Activated CD4-positive, alpha-beta T cell treated with anti-CD3 and anti-CD28 coated beads, Interleukin-2, amount 10 ng/mL, durations not matched to agents 24 days and 14 days (primary cell): ENCODE measurements at regions of chr6 and their contacts with region 1.

Region 1: GRCh38 chr6:159929819-159930218 is 39.0 kb downstream of the MAS1 start:
- DNase-seq: no peak
- H3K4me3 Mint-ChIP-seq: no peak overlapping the region
- H3K27ac Mint-ChIP-seq: no peak overlapping the region
- H3K4me1 Mint-ChIP-seq: peaks cover 23% of the 10 kb centered on the region
- H3K27me3 Mint-ChIP-seq: peaks cover 20% of the 10 kb centered on the region

Region 2: DNA sequence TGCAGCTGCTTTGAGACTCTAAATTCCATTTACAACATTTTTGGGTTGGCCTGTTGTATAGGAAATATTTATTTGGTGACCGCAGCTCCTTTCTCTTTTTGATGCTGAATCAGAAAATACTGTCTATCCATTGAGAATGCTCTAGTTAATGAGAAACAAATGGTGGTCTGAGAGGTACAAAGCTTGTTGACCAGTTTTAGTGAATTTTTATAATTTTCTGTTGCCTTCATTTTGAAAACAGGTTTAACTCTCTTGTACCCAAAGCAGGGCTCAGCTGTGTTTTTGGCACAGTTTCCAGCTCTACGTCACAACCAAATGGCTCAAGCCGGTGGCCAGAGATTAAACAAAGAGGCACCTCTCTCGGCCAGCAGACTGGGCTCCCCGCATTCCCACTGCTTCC is 647.4 kb before region 1 on chr6:
- intact Hi-C with region 1: no loop called
- DNase-seq: no peak
- H3K4me3 Mint-ChIP-seq: no peak overlapping the region
- H3K27ac Mint-ChIP-seq: no peak overlapping the region
- H3K4me1 Mint-ChIP-seq: no peaks in the 10 kb centered on the region
- H3K27me3 Mint-ChIP-seq: peaks cover 3% of the 10 kb centered on the region

Region 3: DNA sequence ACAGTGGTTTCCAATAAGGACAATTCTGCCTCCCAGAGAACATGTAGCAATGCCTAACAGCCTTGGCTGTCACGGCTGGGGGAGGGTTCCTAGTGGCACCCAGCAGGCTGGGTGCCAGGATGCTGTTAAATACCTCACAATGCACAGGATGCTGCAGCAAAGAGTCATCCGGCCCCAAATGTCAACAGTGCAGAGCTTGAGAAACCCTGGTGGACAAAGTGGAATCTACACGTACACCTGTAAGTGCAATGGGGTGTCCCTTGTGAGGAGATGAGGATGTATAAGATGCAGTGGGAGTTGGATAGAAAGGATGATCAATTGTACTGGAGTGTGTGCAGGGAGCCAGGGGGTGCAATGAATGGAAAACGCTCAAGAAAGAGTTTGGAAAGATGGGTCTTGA is 618.2 kb before region 1 on chr6:
- intact Hi-C with region 1: no loop called
- DNase-seq: no peak
- H3K4me3 Mint-ChIP-seq: no peak overlapping the region
- H3K27ac Mint-ChIP-seq: no peak overlapping the region
- H3K4me1 Mint-ChIP-seq: no peaks in the 10 kb centered on the region
- H3K27me3 Mint-ChIP-seq: no peaks in the 10 kb centered on the region

Region 4: GRCh38 chr6:159679091-159680077 is 250.4 kb before region 1 on chr6:
- intact Hi-C with region 1: loop called (anchors 1 kb)
- DNase-seq: no peak
- H3K4me3 Mint-ChIP-seq: peak overlapping the region; percentile 5
- H3K27ac Mint-ChIP-seq: peak overlapping the region; percentile 84
- H3K4me1 Mint-ChIP-seq: peaks cover 18% of the 10 kb centered on the region
- H3K27me3 Mint-ChIP-seq: peaks cover 1% of the 10 kb centered on the region

Region 5: GRCh38 chr6:159789377-159790148 is 140.3 kb before region 1 on chr6 and contains the start of gene TCP1:
- intact Hi-C with region 1: loop called (anchors 2 kb)
- DNase-seq: peak; percentile 100
- H3K4me3 Mint-ChIP-seq: peak within 1 kb of the TSS; percentile 97
- H3K27ac Mint-ChIP-seq: peak within 1 kb of the TSS; percentile 98
- H3K4me1 Mint-ChIP-seq: peaks cover 46% of the 10 kb centered on the region
- H3K27me3 Mint-ChIP-seq: peaks cover 3% of the 10 kb centered on the region
- total RNA-seq, gene TCP1: 528 and 531 TPM in 2 replicates

Region 6: DNA sequence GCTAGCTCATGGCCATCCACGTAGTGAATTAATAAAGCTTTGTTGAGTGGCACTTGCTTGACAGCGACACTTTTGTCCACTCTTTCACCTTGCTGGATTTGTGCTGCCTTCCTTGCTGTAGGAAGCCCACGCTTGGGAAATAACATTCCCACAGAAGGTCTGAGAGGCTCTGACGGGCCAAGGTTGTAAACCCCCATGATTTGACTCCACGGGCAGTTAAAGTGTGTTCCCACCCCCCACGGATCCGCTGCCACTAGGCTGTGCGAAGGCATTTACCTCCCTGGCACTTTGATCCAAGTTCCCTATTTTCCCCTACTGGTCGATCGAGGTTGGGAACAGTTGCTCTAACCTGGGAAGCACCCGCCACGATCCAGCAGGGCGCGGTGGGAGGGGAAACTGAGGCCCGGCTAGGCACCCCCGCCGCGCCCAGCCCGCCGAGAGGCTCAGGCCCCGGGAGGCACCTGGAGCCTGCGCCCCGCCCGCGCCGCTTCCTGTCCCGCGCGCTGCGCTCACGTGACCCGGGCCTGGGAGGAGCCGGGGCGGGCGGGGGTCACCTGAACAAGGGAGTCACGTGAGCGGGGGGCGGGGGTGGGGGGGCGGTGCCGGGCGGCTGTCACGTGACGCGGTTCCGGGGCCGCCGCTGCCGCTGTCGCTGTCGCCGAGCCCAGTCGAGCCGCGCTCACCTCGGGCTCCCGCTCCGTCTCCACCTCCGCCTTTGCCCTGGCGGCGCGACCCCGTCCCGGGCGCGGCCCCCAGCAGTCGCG is 38.8 kb after region 1 on chr6 and contains the start of gene IGF2R:
- intact Hi-C with region 1: loop called (anchors 2 kb)
- DNase-seq: peak; percentile 98
- H3K4me3 Mint-ChIP-seq: peak within 1 kb of the TSS; percentile 88
- H3K27ac Mint-ChIP-seq: peak within 1 kb of the TSS; percentile 91
- H3K4me1 Mint-ChIP-seq: peaks cover 37% of the 10 kb centered on the region
- H3K27me3 Mint-ChIP-seq: peaks cover 23% of the 10 kb centered on the region
- total RNA-seq, gene IGF2R: 75.1 and 77.9 TPM in 2 replicates

Region 7: GRCh38 chr6:160027931-160028330 is 98.1 kb after region 1 on chr6:
- intact Hi-C with region 1: no loop called
- DNase-seq: no peak
- H3K4me3 Mint-ChIP-seq: no peak overlapping the region
- H3K27ac Mint-ChIP-seq: peak overlapping the region; percentile 83
- H3K4me1 Mint-ChIP-seq: peaks cover 20% of the 10 kb centered on the region
- H3K27me3 Mint-ChIP-seq: no peaks in the 10 kb centered on the region

Region 8: GRCh38 chr6:160221423-160221822 is 291.6 kb after region 1 on chr6:
- intact Hi-C with region 1: no loop called
- DNase-seq: no peak
- H3K4me3 Mint-ChIP-seq: no peak overlapping the region
- H3K27ac Mint-ChIP-seq: no peak overlapping the region
- H3K4me1 Mint-ChIP-seq: no peaks in the 10 kb centered on the region
- H3K27me3 Mint-ChIP-seq: peaks cover 6% of the 10 kb centered on the region

Region 9: DNA sequence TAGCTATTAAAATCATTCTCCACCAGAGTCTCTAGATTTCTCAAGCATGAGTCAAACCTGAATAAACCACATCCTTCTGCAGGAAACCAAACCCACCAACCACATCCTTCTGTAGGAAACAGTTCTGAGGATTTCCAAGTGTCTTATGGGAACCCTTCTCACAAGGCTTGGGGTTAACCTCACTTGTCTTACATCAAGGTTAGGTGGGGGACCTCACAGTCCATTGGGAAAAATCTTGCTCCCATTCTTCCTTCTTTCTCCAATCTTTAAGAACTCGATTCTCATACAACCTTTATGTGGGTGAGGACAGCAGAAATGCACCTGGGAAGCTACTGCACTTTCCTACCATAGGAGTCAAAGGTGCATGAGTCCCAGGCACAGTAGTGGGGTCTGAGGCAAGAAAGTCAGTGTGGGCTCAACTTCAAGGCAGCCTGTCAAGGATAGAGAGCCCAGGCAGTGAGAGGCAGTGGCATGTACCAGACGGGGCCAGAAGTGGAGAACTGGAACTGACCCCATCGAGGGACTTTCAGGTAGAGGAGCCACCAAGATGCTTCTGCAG is 532.8 kb after region 1 on chr6:
- intact Hi-C with region 1: loop called (anchors 1 kb)
- DNase-seq: peak; percentile 94
- H3K4me3 Mint-ChIP-seq: peak overlapping the region; percentile 72
- H3K27ac Mint-ChIP-seq: peak overlapping the region; percentile 74
- H3K4me1 Mint-ChIP-seq: peaks cover 56% of the 10 kb centered on the region
- H3K27me3 Mint-ChIP-seq: peaks cover 27% of the 10 kb centered on the region